Uterus (tissue), 4 donors: ENCODE measurements at regions of chr7 and their contacts with region 1.

Region 1: GRCh38 chr7:128462460-128462859 is 6.8 kb downstream of the HILPDA start:
- DNase-seq: no peak
- H3K4me3 ChIP-seq: no peak overlapping the region
- H3K27ac ChIP-seq: no peak overlapping the region
- H3K4me1 ChIP-seq: no peaks in the 10 kb centered on the region
- H3K27me3 ChIP-seq: no peaks in the 10 kb centered on the region
- CTCF ChIP-seq: no peak
- POLR2A ChIP-seq: no peak

Region 2: GRCh38 chr7:128422842-128423241 is 39.6 kb before region 1 on chr7:
- intact Hi-C with region 1: loop called (anchors 5 kb)
- DNase-seq: no peak
- H3K4me3 ChIP-seq: no peak overlapping the region
- H3K27ac ChIP-seq: no peak overlapping the region
- H3K4me1 ChIP-seq: no peaks in the 10 kb centered on the region
- H3K27me3 ChIP-seq: no peaks in the 10 kb centered on the region
- CTCF ChIP-seq: no peak
- POLR2A ChIP-seq: no peak